Gastrocnemius medialis (tissue), 4 donors: ENCODE measurements at regions of chr13 and their contacts with region 1.

Region 1: GRCh38 chr13:40549500-40550094 is 116.8 kb downstream of the FOXO1 start:
- DNase-seq: peak; percentile 61 to 80
- ATAC-seq: peak; percentile 21 to 37
- H3K4me3 ChIP-seq: no peak overlapping the region
- H3K27ac ChIP-seq: peak overlapping the region; percentile 53 to 73 (median 64)
- H3K4me1 ChIP-seq: peaks cover 24 to 32% of the 10 kb centered on the region in 2 donors
- H3K27me3 ChIP-seq: no peaks in the 10 kb centered on the region
- CTCF ChIP-seq: no peak
- POLR2A ChIP-seq: no peak

Region 2: DNA sequence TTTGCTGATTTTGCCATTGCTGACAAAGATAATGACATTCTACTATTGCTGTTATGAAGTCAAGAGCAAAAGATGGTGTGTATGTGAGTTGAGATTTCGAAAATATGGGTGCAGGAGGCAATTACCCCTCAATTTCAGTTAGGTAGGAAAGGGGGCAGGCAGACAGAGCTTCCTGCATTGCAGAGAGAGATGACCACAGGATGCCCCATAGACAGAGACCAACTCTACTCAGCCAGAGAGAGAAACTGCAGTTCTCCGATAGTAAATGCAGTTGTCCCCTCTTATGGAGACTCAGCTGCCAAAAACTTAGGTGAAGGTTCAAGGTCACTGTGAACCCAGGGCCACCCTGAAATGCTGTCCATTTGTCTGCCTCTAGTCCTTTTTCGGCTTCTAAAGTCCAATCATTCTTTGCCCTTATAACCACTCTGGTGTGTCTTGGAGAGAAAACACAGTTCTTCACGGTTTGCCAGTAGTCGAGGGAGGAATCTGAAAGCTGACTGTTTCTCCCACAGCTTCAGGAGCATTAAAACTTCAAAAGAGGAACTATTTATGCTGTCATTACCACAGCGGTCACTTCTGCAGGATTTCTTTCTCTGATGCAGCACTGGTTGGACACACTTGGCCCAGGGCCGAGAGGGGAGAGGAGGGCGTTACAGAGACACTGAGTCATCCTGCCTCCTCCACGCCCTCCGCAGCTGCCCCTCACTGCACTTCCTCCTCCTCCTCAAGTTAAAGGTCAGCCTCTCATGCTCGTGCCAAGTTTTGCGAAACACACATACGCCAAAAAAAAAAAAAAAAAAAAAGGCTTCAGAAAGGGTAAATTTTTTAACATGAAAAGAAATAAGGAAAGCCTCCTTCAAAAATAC is 147.5 kb before region 1 on chr13:
- in situ Hi-C with region 1: no loop called
- intact Hi-C with region 1: loop called (anchors 5 kb)
- DNase-seq: peak; percentile 85 to 95
- ATAC-seq: peak; percentile 78 to 86
- H3K4me3 ChIP-seq: peak overlapping the region in 2 of 4 donors; percentile 10 to 25
- H3K27ac ChIP-seq: peak overlapping the region; percentile 48 to 75 (median 56)
- H3K4me1 ChIP-seq: peaks cover 32 to 42% of the 10 kb centered on the region in 2 donors
- H3K27me3 ChIP-seq: no peaks in the 10 kb centered on the region
- CTCF ChIP-seq: no peak
- POLR2A ChIP-seq: no peak

Region 3: DNA sequence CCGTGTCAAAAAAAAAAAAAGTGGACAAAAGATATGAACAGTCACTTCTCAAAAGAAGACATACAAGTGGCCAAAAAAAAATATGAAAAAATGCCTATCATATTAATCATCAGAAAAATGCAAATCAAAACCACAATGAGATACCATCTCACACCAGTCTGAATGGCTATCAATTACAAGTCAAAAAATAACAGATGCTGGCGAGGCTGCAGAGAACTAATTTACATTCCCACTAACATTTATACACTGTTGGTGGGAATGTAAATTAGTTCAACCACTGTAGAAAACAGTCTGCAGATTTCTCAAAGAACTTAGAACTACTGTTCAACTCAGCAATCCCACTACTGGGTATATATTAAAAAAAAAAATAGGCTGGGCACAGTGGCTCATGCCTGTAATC is 143.3 kb after region 1 on chr13:
- in situ Hi-C with region 1: no loop called
- intact Hi-C with region 1: no loop called
- DNase-seq: no peak
- ATAC-seq: no peak
- H3K4me3 ChIP-seq: no peak overlapping the region
- H3K27ac ChIP-seq: no peak overlapping the region
- H3K4me1 ChIP-seq: no peaks in the 10 kb centered on the region
- H3K27me3 ChIP-seq: no peaks in the 10 kb centered on the region
- CTCF ChIP-seq: no peak
- POLR2A ChIP-seq: no peak